Left cardiac atrium (tissue), 4 donors: ENCODE measurements at regions of chr3 and their contacts with region 1.

Region 1: DNA sequence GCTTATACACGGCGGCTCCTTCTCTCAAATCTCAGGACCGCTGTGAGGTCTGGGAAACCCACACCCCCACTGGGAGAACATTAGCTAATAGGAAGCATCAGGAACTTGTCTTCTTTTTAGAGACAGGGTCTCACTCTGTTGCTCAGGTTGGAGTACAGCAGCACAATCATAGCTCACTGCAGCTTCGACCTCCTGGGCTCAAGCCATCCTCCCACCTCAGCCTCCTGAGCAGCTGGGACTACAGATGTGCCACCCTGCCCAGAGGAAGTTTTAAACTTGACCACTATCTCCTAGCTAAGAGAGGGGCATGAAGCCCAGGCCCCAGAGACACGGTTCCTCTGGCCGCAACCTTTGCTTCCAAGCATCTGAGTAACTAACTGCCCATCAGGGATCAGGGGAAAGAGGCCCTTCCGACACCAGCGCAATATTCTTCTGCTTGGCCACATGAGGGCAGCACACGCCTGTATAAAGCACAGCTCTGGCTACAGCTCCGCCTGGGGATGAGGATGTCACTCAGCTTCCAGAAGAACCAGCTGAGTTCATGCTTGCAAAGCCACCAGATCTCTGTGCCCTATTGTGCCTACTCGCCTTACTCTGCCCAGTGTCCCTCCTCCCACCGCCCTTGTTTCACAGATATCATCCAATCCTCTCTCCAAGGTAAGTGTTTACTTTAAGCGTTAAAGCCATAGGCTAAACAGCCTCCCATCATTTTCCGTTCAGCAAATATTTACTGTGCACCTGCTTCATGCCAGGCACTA is 57.5 kb upstream of the SLC6A11 start:
- DNase-seq: peak; percentile 44
- ATAC-seq: peak; percentile 87 to 93

Region 2: DNA sequence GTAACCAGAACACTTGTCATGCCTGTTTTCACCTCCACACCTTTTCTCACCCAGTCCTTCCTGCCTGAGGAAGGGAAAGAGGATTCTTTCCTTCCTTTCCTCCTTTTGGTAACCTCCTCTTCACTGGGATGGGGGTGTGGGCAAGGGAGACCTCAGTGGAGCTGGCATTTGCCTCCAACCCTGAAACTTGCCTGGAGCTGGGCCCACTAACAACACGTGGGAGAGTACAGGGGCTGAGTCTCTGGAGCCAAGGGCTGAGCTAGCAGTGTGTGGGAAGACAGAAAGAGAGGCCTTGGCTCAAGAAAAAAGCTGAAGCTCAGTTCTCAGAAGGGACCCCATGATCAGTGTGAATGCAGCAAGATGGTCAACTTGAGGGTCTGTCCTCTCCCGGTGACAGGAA is 29.0 kb before region 1 on chr3:
- intact Hi-C with region 1: no loop called
- DNase-seq: no peak
- ATAC-seq: no peak

Region 3: GRCh38 chr3:10883478-10884234 is 125.2 kb after region 1 on chr3:
- intact Hi-C with region 1: loop called in 1 of 2 experiments (anchors 5 kb)
- DNase-seq: no peak
- ATAC-seq: no peak

Region 4: GRCh38 chr3:11060500-11061251 is 302.2 kb after region 1 on chr3:
- intact Hi-C with region 1: loop called (anchors 1 to 10 kb)
- DNase-seq: peak; percentile 78
- ATAC-seq: peak; percentile 79 to 83